A549 (cell line): ENCODE measurements at regions of chr3 and their contacts with region 1.

Region 1: GRCh38 chr3:133573054-133573628 is 345 bp upstream of the CDV3 start:
- DNase-seq: peak; percentile 74 to 99
- ATAC-seq: peak; percentile 81 to 90
- H3K4me3 ChIP-seq: peak overlapping the region; percentile 86
- H3K27ac ChIP-seq: peak overlapping the region; percentile 95 to 100
- H3K4me1 ChIP-seq: peaks cover 60% of the 10 kb centered on the region
- CTCF ChIP-seq: no peak
- EP300 ChIP-seq: no peak
- POLR2A ChIP-seq: peak; percentile 61
- RAD21 ChIP-seq: no peak

Region 2: DNA sequence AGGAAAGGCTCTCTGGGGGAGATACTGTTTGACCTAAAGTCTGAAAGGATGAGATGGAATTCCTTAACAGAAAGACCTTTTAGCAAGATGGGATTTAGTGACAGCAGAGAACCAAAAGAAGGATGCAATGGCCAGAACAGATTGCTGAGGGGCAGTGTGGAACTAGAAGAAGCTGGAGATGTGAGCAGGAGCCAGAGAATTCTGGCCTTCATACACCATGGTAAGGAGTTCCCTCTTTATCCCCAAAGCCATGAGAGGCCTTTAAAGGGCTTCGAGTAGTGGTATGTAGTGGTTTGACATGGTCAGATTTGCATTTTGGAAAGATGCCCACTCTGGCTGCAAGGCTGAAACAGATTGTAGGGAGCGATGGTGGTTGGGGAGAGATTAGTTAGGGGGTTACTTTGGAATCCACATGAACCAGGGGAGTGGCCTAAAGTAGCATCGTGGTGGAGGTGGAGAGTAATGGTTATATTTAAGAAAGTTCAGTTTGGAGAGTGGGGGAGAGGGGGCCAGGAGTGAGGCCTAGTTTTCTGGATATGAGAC is 817.0 kb before region 1 on chr3:
- CTCF ChIA-PET with region 1: no interaction called
- POLR2A ChIA-PET with region 1: no interaction called
- DNase-seq: no peak
- ATAC-seq: no peak
- H3K4me3 ChIP-seq: no peak overlapping the region
- H3K27ac ChIP-seq: no peak overlapping the region
- H3K4me1 ChIP-seq: no peaks in the 10 kb centered on the region
- CTCF ChIP-seq: no peak
- EP300 ChIP-seq: no peak
- POLR2A ChIP-seq: no peak
- RAD21 ChIP-seq: no peak

Region 3: DNA sequence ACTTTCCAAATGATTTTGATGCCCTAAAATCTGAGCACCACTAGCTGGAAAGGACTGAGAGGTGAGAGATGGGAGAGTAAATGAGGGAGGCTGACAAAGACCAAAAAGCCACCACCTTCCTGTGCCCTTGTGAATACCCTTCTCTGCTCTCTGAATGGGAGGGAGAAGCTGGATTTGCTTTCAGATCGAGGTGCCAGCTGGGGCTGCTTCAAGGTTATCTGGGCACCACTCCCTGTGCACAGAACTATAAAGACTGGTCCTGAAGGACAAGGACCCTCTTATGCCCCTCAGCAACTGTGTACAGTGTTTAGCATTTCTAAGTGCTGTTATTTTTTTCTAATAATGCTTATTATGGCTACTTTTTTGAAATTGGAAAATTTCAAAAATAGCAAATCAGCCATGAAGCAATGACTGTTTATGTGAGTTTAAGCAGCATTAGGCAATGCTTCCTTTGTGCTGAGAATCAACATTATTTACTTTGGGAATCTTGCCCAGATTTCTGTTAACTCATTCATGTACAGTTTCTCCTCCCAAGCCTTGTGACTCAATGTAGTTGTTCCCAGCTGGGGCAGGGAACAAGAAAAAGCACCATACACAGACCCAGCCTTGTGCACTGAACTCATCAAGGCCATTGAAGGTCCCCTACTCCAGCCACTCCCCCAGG is 37.0 kb before region 1 on chr3:
- CTCF ChIA-PET with region 1: interaction called, 5 read pairs
- POLR2A ChIA-PET with region 1: interaction called, 17 read pairs
- DNase-seq: peak; percentile 22 to 69
- ATAC-seq: peak; percentile 77 to 79
- H3K4me3 ChIP-seq: no peak overlapping the region
- H3K27ac ChIP-seq: peak overlapping the region; percentile 46 to 83
- H3K4me1 ChIP-seq: peaks cover 23% of the 10 kb centered on the region
- CTCF ChIP-seq: no peak
- EP300 ChIP-seq: no peak
- POLR2A ChIP-seq: no peak
- RAD21 ChIP-seq: 0 out of 5 replicates have a peak, but pooled peaks have one; percentile 2 to 22

Region 4: GRCh38 chr3:133547432-133548041 is 25.6 kb before region 1 on chr3:
- CTCF ChIA-PET with region 1: interaction called, 9 read pairs
- POLR2A ChIA-PET with region 1: interaction called, 12 read pairs
- DNase-seq: peak in 1 of 2 experiments; percentile 53
- ATAC-seq: peak; percentile 77 to 83
- H3K4me3 ChIP-seq: no peak overlapping the region
- H3K27ac ChIP-seq: peak overlapping the region; percentile 62 to 73
- H3K4me1 ChIP-seq: peaks cover 26% of the 10 kb centered on the region
- CTCF ChIP-seq: no peak
- EP300 ChIP-seq: no peak
- POLR2A ChIP-seq: no peak
- RAD21 ChIP-seq: no peak